ENCODE measurements at regions of chr7 and their contacts with region 1.

Region 1: DNA sequence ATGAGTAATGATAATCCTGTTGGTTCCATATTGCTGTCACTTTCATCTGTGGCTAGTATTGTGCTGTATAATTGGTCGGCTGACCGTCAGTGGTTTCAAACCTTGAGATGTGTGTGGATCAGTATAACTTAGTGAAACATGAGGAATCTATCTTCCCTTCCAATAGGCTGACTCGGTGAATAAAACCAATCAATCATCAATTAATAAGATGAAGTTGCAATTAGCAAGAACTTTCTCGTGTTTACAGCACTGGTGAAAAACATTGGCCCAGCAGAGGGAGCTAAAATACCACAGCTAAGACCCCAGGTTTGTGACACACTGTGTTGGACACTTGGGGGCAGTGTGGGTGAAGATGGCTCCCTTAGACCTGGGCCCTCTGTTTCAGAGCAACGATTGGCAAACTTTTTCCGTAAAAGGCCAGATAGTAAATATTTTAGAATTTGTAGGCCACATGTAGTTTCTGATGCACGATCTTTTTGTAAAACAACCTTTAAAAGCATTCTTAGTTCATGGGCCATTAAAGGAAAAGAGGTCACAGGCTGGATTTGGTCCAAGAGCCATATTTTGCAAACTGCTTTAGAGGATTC is 47.8 kb downstream of the STRA8 start:
- DNase-seq: peak; percentile 45 to 87
- ATAC-seq: peak; percentile 86 to 97 (median 95)
- H3K4me3 ChIP-seq: peak overlapping the region in 2 of 10 donors; percentile 20 to 24
- H3K27ac ChIP-seq: no peak overlapping the region
- H3K4me1 ChIP-seq: peaks cover 0 to 10% (median 0%) of the 10 kb centered on the region in 9 donors
- H3K27me3 ChIP-seq: peaks cover 0 to 18% (median 5%) of the 10 kb centered on the region in 7 donors
- CTCF ChIP-seq: peak; percentile 81 to 100 (median 96)

Region 2: GRCh38 chr7:134920026-134920753 is 361.3 kb before region 1 on chr7:
- intact Hi-C with region 1: no loop called
- DNase-seq: no peak
- ATAC-seq: no peak
- H3K4me3 ChIP-seq: no peak overlapping the region
- H3K27ac ChIP-seq: peak overlapping the region in 3 of 10 donors; percentile 2 to 39 (median 4)
- H3K4me1 ChIP-seq: peaks cover 4 to 67% (median 37%) of the 10 kb centered on the region in 9 donors
- H3K27me3 ChIP-seq: no peaks in the 10 kb centered on the region
- CTCF ChIP-seq: no peak

Region 3: DNA sequence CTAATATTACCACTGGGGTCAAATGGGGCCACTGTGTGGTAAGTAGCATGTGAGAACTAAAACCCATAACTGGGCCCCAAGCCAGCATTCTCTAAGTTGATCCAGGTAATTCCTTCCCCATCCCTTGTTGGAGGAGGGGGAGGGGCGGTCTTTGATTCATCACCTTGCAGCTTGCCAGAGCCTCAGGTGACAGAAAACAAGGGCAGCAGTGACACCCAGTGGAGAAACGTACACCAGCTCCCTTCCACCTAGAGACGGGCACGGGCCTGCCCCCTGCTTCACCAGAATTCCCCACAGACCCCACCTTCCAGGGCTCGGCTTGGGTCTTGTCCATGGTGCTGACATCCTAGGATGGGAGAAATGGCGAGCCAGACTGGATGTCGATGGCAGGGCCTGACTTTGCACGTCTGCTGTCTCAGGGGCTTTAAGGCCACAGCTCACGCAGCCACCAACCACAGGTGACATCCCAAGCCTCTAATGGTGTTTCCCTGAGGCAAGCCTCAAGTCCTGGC is 54.2 kb after region 1 on chr7:
- intact Hi-C with region 1: loop called in 6 of 10 experiments (anchors 1 to 5 kb)
- DNase-seq: peak in 1 of 2 donors; percentile 32
- ATAC-seq: peak in 7 of 8 donors; percentile 42 to 85 (median 67)
- H3K4me3 ChIP-seq: no peak overlapping the region
- H3K27ac ChIP-seq: no peak overlapping the region
- H3K4me1 ChIP-seq: no peaks in the 10 kb centered on the region
- H3K27me3 ChIP-seq: no peaks in the 10 kb centered on the region
- CTCF ChIP-seq: peak in 8 of 9 donors; percentile 10 to 51 (median 42)

Region 4: GRCh38 chr7:135372222-135372621 is 90.8 kb after region 1 on chr7:
- intact Hi-C with region 1: no loop called
- DNase-seq: no peak
- ATAC-seq: no peak
- H3K4me3 ChIP-seq: no peak overlapping the region
- H3K27ac ChIP-seq: no peak overlapping the region
- H3K4me1 ChIP-seq: no peaks in the 10 kb centered on the region
- H3K27me3 ChIP-seq: no peaks in the 10 kb centered on the region
- CTCF ChIP-seq: no peak

Region 5: GRCh38 chr7:135414850-135415439 is 133.5 kb after region 1 on chr7:
- intact Hi-C with region 1: loop called in 1 of 10 experiments (anchors 10 kb)
- DNase-seq: peak in 1 of 2 donors; percentile 10
- ATAC-seq: no peak
- H3K4me3 ChIP-seq: no peak overlapping the region
- H3K27ac ChIP-seq: no peak overlapping the region
- H3K4me1 ChIP-seq: no peaks in the 10 kb centered on the region
- H3K27me3 ChIP-seq: no peaks in the 10 kb centered on the region
- CTCF ChIP-seq: peak in 7 of 9 donors; percentile 24 to 57 (median 45)

Region 6: DNA sequence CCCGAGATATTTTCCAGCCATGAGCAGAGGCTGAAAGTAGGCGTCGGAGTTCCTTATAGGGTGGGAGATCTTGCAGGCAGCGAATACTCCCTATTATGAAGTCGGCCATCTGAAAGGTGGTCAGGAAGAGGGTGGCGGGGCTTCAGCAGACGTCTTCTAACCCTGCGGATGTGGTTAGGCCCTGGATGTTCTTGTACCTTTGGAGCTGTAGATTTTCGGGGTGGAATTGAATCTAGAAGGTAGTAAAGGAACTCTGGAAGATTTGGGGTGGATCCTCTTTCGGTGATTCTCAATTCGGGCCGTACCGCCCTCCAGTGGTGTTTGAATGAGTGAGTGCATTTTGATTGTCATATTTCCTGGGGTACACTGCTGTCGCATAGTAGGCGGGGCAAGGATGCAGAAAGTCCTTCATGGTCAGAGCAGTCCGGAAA is 276.9 kb after region 1 on chr7:
- intact Hi-C with region 1: loop called (anchors 1 to 10 kb)
- DNase-seq: peak; percentile 23 to 41
- ATAC-seq: peak; percentile 60 to 90 (median 73)
- H3K4me3 ChIP-seq: peak overlapping the region; percentile 68 to 89 (median 82)
- H3K27ac ChIP-seq: peak overlapping the region; percentile 92 to 98 (median 94)
- H3K4me1 ChIP-seq: peaks cover 0 to 31% (median 14%) of the 10 kb centered on the region in 9 donors
- H3K27me3 ChIP-seq: no peaks in the 10 kb centered on the region
- CTCF ChIP-seq: peak; percentile 21 to 71 (median 57)

Region 7: DNA sequence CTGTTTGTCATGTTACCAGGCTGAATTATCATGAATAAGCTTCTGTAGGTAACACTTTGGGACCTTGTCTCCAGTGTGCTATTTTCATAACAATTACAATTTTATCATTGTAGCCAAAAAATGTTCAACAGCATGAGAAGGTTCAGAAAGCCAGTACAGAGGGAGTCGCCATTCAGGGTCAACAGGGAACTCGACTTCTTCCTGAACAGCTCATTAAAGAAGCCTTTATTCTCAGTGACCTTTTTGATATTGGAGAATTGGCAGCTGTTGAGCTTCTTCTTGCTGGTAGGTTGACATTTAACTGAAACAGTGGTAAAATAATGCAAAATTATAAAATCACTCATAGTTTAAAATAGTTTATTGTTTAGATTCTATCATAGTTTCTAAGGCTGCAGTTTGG is 292.1 kb after region 1 on chr7:
- intact Hi-C with region 1: no loop called
- DNase-seq: no peak
- ATAC-seq: no peak
- H3K4me3 ChIP-seq: no peak overlapping the region
- H3K27ac ChIP-seq: no peak overlapping the region
- H3K4me1 ChIP-seq: peaks cover 0 to 6% (median 0%) of the 10 kb centered on the region in 9 donors
- H3K27me3 ChIP-seq: no peaks in the 10 kb centered on the region
- CTCF ChIP-seq: no peak

Measured in heart right ventricle (tissue), 16 donors.